Endothelial cell of umbilical vein (primary cell): ENCODE measurements at regions of chr6 and their contacts with region 1.

Region 1: DNA sequence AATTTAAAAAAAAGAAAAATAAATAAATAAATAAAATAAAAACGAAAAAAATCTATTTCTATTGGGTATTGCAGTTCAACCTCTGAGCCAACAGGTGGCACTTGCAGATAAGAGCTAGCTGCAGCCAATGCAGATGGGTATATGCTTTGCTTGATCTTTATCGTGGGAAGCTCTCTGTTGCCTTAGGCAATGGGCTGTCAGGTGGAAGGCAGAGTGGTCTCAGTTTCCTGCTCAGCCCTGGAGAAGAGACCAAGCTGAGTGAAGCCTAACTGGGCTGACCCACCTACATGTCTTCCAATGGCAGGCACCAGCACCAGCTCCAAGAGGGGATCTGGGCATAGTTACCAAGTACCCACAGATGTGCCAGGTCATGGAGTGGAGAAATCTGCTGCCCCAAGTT is 95.0 kb downstream of the AK9 start:
- DNase-seq: peak; percentile 50
- H3K4me3 ChIP-seq: no peak overlapping the region
- H3K27ac ChIP-seq: no peak overlapping the region
- H3K4me1 ChIP-seq: no peaks in the 10 kb centered on the region
- H3K27me3 ChIP-seq: no peaks in the 10 kb centered on the region
- CTCF ChIP-seq: peak in 1 of 2 donors; percentile 51
- POLR2A ChIP-seq: no peak

Region 2: GRCh38 chr6:109580519-109580918 is 15.5 kb before region 1 on chr6:
- CTCF ChIA-PET with region 1: interaction called, 15 read pairs
- POLR2A ChIA-PET with region 1: no interaction called
- dilution Hi-C with region 1: no loop called
- intact Hi-C with region 1: no loop called
- DNase-seq: peak; percentile 6
- H3K4me3 ChIP-seq: no peak overlapping the region
- H3K27ac ChIP-seq: no peak overlapping the region
- H3K4me1 ChIP-seq: no peaks in the 10 kb centered on the region
- H3K27me3 ChIP-seq: no peaks in the 10 kb centered on the region
- CTCF ChIP-seq: no peak
- POLR2A ChIP-seq: no peak

Region 3: GRCh38 chr6:109610590-109610989 is 14.6 kb after region 1 on chr6:
- CTCF ChIA-PET with region 1: interaction called, 14 read pairs
- POLR2A ChIA-PET with region 1: no interaction called
- dilution Hi-C with region 1: no loop called
- intact Hi-C with region 1: no loop called
- DNase-seq: peak; percentile 8
- H3K4me3 ChIP-seq: no peak overlapping the region
- H3K27ac ChIP-seq: no peak overlapping the region
- H3K4me1 ChIP-seq: no peaks in the 10 kb centered on the region
- H3K27me3 ChIP-seq: no peaks in the 10 kb centered on the region
- CTCF ChIP-seq: no peak
- POLR2A ChIP-seq: no peak